Posterior vena cava (tissue), 2 donors: ENCODE measurements at regions of chr10 and their contacts with region 1.

Region 1: GRCh38 chr10:98030031-98030821 is at the start of gene CRTAC1:
- DNase-seq: no peak
- total RNA-seq, gene CRTAC1: 22.9 to 24.5 TPM

Region 2: DNA sequence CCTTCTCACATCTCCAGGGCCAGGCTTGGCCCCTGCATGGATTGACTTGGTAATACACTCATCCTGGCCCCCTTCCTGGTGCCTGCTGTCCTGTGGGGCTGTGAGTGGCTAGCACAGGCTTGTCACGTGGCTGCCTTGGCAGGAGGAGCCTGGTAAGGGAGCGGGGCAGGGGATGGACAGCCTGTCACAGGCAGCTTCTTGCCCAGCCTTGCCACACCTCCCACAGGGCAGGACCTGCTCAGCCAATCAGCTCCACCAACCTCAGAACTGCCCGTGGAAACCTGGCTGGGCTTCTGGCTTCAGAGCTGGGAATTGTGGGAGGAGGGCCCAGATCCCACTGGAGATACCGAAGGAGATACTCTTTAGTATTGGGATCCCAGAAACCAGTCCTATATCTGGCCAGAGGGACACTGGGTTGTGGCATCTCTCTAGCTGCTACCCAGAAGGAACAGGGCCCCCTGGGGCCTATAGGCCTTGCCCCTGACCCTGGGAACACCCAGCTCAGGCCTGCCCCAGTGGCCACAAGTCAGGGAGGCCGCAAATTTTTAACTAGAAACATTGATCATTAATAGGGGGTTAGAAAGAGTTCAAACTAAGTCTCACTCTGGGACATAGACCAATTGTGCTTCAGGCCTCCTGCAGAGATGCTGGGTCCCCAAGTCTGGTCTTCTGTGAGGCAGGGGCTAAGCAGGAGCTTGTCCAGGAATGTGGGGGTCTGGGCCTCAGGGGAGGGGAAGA is 446.0 kb before region 1 on chr10 and contains the start of gene HOGA1:
- intact Hi-C with region 1: no loop called
- DNase-seq: peak; percentile 94
- total RNA-seq, gene HOGA1: 1.5 to 4.1 TPM

Region 3: DNA sequence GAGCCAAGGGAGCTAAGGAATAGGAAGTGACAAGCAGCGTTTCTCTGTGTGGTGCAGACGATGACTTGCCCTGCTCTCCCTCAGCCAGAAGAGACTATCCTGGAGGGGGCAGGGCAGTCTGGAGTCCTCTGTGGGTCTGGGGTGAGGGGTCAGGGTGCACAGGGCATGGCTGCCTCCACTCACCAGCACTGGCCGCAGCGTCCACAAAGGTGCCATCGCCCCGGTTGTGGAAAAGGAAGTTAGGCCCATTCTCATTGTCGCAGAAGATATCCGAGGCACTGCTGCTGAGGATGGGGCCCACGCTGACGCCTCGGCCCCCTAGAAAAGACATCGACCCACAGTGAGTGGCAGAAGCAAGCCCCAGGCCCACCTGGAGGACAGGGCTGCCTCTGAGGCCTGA is 122.4 kb before region 1 on chr10:
- intact Hi-C with region 1: loop called in 1 of 2 experiments (anchors 2 kb)
- DNase-seq: no peak

Region 4: DNA sequence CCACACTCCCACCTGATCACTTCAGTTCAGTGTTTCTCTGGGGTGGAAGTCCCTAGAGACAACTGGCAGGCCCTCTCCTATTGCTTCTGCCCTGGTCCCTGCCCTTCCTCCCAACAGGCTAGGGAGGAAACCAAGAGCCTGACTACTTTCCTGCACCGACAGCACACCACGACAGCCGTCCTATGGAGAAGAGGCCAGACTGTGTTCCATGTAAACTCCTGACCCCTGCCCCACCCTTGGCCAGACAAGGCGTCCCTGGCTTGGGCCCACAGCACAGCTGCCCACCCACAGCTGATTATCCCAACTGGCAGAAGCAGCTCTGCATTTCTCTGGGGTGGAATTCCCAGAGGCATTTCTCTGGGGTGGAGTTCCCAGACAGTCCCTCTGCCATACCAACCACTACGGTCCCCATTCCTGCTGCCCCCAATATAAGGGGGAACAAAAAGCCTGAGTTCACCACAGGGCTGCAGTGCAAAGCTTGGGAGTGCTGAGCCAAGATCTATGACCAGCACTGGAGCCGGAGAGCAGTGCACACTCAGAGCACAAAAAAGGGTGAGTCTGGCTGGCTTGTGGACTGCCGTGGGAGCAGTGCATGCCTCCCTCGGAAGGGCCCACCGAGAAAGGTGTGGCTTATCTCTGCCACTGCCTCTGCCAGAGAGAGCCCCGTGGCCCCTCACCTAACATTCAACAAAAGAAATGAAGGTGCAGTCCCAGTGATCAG is 1012.0 kb after region 1 on chr10:
- intact Hi-C with region 1: no loop called
- DNase-seq: no peak